ENCODE measurements at regions of chr2 and their contacts with region 1.

Region 1: DNA sequence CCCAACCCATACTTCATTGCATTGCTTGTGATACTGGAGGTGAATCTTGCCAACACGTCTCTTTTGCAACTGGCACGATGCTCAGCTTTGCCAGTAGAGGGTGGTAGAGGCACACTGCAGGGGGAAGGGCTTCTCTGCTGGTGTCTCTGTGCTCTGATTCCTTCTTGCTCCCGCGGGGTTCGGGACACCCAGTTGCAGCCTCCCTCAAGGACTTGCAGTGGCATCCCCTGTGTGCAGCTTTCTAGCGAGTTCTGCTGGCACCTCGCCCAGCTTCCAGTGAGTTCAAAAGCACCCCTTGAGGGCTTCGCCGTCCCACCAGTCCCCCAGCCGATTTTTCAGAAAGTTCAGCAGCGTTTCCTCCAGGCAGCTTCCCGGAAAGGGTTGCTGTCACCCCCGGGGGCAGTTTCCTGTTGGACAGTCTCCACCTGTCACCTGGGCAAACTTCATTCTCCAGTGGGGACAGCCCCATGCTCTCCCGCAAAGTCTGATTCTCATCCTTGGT is 35.3 kb upstream of the EN1 start:
- DNase-seq: peak; percentile 74
- H3K4me3 Mint-ChIP-seq: no peak overlapping the region
- H3K27ac Mint-ChIP-seq: no peak overlapping the region
- H3K4me1 Mint-ChIP-seq: peaks cover 10% of the 10 kb centered on the region
- H3K27me3 Mint-ChIP-seq: no peaks in the 10 kb centered on the region
- CTCF ChIP-seq: peak; percentile 97

Region 2: DNA sequence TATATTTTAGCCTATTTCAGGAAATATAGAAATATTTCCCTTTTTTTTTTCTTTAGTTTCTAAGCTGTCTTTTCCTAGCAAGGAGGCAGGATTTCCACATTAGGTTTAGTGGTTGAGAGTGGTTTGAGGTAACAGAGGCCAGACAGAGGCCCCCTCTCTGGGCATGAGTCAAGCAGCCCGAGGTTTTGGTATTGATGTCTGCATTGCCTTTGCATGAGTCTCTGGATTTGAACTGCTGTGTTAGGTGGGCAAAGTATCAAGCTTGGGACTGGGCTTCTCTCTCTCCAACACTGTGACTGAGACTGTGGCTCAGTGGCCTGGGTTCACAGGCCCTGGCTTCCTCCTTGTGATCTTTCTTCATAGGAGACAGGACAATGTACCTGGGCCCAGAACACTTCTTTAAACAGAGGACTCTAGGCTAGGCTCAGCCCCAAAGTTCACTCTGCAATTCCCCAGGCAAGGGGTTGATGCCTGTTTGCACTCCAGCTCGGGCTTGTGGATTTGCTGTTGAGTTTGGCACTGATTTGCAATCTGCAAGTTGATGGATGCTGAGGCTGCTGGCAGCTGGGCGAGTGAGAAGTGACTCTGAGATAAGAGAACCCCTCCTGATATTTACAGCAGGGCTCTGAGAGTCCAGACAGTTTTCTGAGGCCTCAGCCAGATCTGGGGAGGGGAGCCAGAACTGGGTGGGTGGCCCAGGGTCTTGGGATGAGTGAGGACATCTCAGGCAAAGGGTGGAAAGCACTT is 306.5 kb before region 1 on chr2:
- CTCF ChIA-PET with region 1: no interaction called
- POLR2A ChIA-PET with region 1: no interaction called
- intact Hi-C with region 1: no loop called
- DNase-seq: no peak
- H3K4me3 Mint-ChIP-seq: no peak overlapping the region
- H3K27ac Mint-ChIP-seq: no peak overlapping the region
- H3K4me1 Mint-ChIP-seq: no peaks in the 10 kb centered on the region
- H3K27me3 Mint-ChIP-seq: no peaks in the 10 kb centered on the region
- CTCF ChIP-seq: no peak

Region 3: DNA sequence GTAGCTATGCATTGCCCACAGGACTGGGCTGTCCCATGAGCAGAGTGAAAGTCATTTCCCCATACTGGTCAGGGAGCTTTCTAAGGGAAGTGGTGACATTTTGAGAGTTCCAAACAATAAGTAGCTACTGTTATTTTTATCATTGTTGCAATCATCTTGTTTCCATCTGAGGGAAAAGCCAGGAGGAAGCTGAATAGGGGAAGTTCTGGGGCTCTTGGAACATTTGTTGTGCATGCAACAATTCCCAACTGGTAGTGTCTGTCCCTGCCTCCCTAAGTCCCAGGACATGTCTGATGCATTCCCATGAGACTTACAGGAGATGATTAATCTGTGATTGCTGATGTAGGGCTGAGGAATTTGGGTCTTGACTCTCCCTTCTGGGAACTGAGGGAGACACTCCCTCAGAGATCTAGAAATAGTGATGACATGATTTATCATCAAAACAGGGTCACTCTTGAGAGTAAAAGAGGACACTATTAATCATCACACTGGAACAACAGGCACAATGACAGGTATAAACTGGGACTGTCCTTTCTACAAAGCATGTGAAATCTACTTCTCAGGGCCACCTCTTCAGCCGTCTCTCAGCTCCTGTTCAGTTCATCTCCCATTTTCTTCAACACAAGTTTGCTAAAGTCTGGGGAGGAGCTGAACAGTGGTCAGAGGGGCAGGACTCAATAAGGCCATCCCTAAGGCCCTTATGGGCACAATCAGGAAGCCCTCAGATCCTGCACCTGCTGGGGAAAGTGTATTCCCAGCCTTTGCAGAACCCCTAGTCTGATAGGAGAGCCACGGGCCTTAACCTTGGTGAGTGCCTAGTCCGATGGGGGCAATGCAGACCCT is 31.3 kb after region 1 on chr2:
- CTCF ChIA-PET with region 1: interaction called, 14 read pairs
- POLR2A ChIA-PET with region 1: no interaction called
- intact Hi-C with region 1: no loop called
- DNase-seq: peak; percentile 61
- H3K4me3 Mint-ChIP-seq: no peak overlapping the region
- H3K27ac Mint-ChIP-seq: peak overlapping the region; percentile 83
- H3K4me1 Mint-ChIP-seq: peaks cover 9% of the 10 kb centered on the region
- H3K27me3 Mint-ChIP-seq: no peaks in the 10 kb centered on the region
- CTCF ChIP-seq: no peak

Region 4: GRCh38 chr2:119028327-119029174 is 145.8 kb after region 1 on chr2:
- CTCF ChIA-PET with region 1: interaction called, 13 read pairs
- POLR2A ChIA-PET with region 1: no interaction called
- intact Hi-C with region 1: no loop called
- DNase-seq: peak; percentile 65
- H3K4me3 Mint-ChIP-seq: no peak overlapping the region
- H3K27ac Mint-ChIP-seq: no peak overlapping the region
- H3K4me1 Mint-ChIP-seq: no peaks in the 10 kb centered on the region
- H3K27me3 Mint-ChIP-seq: peaks cover 48% of the 10 kb centered on the region
- CTCF ChIP-seq: peak; percentile 37

Region 5: GRCh38 chr2:119174216-119175037 is 291.7 kb after region 1 on chr2:
- CTCF ChIA-PET with region 1: interaction called, 81 read pairs
- POLR2A ChIA-PET with region 1: no interaction called
- intact Hi-C with region 1: loop called (anchors 1 kb)
- DNase-seq: peak; percentile 55
- H3K4me3 Mint-ChIP-seq: no peak overlapping the region
- H3K27ac Mint-ChIP-seq: no peak overlapping the region
- H3K4me1 Mint-ChIP-seq: peaks cover 11% of the 10 kb centered on the region
- H3K27me3 Mint-ChIP-seq: peaks cover 1% of the 10 kb centered on the region
- CTCF ChIP-seq: peak; percentile 73

Region 6: DNA sequence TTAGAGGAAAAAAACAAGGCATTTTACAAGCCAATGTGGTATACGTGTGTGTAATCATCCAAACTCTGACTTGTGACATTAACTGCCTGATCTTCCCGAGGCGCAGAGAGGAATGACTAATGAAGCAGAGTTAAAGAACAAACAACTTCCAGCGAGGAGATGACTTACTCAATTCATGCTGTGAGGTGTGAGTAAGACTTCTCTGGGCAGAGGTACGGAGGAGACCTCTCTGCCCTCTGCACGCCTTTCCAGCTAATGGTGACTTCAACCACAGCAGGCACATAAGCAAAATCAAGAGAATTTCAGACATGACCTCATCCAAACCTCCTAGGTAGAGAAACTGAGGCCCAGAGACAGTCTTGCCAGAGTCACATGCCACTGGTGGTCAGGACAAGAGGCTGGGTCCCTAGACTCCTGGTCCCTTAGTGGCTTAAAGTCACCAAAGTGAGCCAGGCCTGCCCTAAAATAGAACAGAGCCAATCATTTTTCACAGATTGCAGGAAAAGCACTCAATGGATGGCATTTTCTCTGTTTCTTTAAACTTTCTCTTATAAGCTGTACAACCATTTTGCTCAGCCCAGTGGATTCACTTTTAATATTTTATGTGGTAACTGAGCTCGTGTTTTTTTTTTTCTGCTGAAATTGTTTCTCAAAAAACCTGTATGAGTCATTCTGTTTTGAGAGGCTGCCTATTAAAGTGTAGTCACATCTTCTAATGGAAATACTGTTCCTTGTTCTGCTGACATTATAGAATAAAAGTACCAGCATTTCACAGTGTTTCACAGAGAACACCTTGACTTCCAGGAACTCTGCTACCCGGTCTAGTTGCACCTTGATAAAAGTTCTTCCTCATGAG is 370.3 kb after region 1 on chr2:
- CTCF ChIA-PET with region 1: interaction called, 12 read pairs
- POLR2A ChIA-PET with region 1: interaction called, 3 read pairs
- intact Hi-C with region 1: no loop called
- DNase-seq: peak; percentile 96
- H3K4me3 Mint-ChIP-seq: peak overlapping the region; percentile 38
- H3K27ac Mint-ChIP-seq: peak overlapping the region; percentile 96
- H3K4me1 Mint-ChIP-seq: peaks cover 41% of the 10 kb centered on the region
- H3K27me3 Mint-ChIP-seq: no peaks in the 10 kb centered on the region
- CTCF ChIP-seq: no peak

Region 7: DNA sequence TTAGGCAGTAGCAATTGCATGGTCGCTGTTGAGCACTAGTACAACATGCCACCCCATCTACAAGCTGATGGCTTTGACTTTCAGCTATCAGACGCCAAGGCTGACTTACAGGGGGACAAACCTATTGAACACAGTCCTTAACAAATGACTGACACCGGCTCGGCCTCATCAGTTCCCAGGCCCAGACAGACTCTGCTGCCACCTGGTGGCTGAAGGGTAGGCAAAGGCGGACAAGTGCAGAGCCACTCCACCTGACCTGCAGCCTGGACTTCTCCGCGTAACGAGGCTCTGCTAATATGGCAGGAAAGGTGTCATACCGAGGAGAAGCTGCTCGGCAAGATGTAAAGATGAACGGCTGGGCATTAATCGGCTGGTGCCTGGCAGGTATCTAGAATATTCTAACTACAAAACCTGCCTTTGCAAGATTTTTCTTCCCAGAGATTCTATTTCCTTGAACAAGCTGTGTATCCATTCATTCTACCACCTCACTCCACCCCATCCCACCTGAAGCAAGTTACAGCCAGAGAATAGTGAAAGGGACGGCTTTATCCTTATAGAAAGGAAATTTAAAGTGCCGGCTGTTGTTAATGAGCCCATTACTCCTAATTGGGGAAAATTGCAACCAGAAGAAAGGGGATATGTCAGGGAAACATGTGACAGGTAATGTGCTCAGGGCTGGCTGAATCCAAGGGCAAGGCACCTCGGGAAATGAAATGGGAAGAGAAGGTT is 408.3 kb after region 1 on chr2:
- CTCF ChIA-PET with region 1: interaction called, 145 read pairs
- POLR2A ChIA-PET with region 1: no interaction called
- intact Hi-C with region 1: loop called (anchors 1 kb)
- DNase-seq: peak; percentile 74
- H3K4me3 Mint-ChIP-seq: no peak overlapping the region
- H3K27ac Mint-ChIP-seq: no peak overlapping the region
- H3K4me1 Mint-ChIP-seq: no peaks in the 10 kb centered on the region
- H3K27me3 Mint-ChIP-seq: no peaks in the 10 kb centered on the region
- CTCF ChIP-seq: peak; percentile 64

Region 8: DNA sequence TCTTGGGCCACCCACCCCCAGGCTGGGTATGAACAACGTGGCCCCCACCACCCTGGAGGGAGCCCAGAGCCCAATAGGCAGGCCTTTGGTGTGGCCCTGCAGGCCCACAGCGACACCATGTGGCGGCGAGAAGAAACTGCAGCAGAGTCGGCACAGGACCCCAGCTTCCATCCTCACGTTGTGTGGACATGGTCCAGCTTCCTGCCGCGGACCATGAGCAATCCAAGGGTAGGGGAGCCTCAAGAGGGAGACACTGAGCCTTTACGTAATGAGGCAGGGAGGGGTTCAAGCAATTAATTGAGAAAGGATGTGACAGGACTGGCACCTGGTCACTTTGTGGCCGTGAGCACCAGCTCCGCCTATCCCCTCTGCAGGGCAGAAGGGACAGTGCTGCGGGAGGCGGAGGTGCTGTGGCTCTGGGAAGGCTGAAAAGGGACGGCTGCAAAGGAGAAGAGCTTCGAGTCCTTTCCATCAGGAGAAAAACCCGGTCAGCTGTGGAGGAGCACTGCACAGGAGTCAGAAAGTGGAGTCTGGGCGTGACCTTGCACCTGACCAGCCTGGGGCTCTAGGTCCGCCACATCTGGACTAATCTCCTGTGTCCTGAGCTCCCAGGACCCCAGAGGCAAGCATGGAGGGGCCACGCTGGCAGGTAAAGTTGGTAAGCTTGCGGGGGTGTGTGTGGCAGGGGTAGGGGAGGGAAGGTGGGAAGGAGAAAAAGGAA is 593.7 kb after region 1 on chr2:
- CTCF ChIA-PET with region 1: interaction called, 8 read pairs
- POLR2A ChIA-PET with region 1: no interaction called
- intact Hi-C with region 1: loop called (anchors 5 kb)
- DNase-seq: peak; percentile 65
- H3K4me3 Mint-ChIP-seq: no peak overlapping the region
- H3K27ac Mint-ChIP-seq: no peak overlapping the region
- H3K4me1 Mint-ChIP-seq: peaks cover 5% of the 10 kb centered on the region
- H3K27me3 Mint-ChIP-seq: no peaks in the 10 kb centered on the region
- CTCF ChIP-seq: peak; percentile 98

Region 9: DNA sequence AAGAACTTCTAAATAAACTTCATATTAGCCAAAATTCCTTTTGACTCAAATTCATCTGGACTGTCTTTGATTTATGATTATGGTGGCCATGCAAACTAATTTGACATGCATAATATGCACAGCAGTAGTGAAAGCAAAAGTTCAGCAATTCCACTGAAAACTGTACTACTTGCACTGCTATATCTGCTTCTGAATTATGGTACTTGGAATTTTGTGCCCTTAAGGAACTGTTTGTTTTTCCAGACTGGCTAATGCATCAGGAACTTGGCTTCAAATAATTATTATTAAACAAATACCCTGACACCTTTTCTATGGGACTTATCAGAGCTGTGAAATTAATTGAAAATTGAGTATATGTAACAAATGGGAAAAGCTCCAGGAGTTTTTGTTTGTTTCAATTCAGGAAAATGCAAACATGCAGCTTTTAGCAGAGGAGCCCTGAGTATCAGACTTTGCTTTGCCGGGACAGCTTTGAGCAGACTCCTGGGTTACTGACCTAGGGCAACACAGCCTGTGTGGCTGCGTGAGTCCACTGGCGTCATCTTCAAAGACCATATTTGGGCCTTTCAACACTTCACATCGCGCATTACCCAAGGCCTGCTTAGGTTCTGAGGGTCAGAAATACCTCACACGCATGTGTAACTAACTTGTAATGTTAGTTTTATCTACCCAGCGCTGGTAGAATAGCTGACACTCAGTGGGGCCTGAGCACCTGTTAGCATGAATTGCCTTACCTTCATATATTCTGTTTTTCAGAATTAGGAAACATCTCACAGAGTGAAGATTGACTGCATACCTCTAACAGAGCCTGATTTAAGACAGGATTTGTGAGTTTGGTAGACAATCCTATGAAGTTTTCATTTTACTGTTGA is 696.9 kb after region 1 on chr2:
- CTCF ChIA-PET with region 1: no interaction called
- POLR2A ChIA-PET with region 1: no interaction called
- intact Hi-C with region 1: no loop called
- DNase-seq: no peak
- H3K4me3 Mint-ChIP-seq: no peak overlapping the region
- H3K27ac Mint-ChIP-seq: no peak overlapping the region
- H3K4me1 Mint-ChIP-seq: no peaks in the 10 kb centered on the region
- H3K27me3 Mint-ChIP-seq: no peaks in the 10 kb centered on the region
- CTCF ChIP-seq: no peak

Region 10: GRCh38 chr2:119766944-119767343 is 884.2 kb after region 1 on chr2:
- CTCF ChIA-PET with region 1: no interaction called
- POLR2A ChIA-PET with region 1: no interaction called
- intact Hi-C with region 1: no loop called
- DNase-seq: no peak
- H3K4me3 Mint-ChIP-seq: no peak overlapping the region
- H3K27ac Mint-ChIP-seq: no peak overlapping the region
- H3K4me1 Mint-ChIP-seq: peaks cover 45% of the 10 kb centered on the region
- H3K27me3 Mint-ChIP-seq: no peaks in the 10 kb centered on the region
- CTCF ChIP-seq: no peak